Activated naive CD4-positive, alpha-beta T cell treated with anti-CD3 and anti-CD28 coated beads for 36 hours (primary cell): ENCODE measurements at regions of chr6 and their contacts with region 1.

Region 1: DNA sequence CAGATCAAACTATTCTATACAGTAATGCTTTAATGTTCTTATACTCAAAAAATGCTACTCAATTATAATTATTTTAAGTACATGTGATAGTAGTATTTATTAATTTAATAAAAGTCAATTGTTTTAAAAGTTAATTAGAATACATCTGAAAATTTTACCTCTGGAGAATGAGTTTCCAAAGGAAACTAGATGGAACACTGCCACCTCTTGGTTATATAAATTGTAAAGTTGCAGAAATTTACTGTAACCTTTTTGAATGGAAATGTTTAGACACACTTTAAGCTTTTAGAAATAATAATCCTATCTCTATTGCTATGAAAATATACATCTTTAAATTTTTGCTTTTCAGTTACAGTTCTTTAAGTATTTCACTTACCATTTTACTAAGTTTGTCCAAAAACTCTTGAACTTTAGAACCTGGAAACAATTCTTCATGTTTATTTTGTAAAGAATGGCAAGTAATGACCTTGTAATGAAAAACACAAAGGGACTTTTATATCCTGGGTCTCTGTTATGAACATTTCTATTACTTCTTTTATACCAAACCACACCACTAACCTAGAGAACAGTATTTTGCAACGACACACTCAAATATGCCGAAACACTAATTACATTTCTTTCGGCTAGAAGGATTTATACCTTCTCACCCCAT is 10.9 kb upstream of the BMP5 start:
- DNase-seq: no peak
- H3K4me3 Mint-ChIP-seq: no peak overlapping the region
- H3K27ac Mint-ChIP-seq: no peak overlapping the region
- H3K4me1 Mint-ChIP-seq: no peaks in the 10 kb centered on the region
- H3K27me3 Mint-ChIP-seq: no peaks in the 10 kb centered on the region

Region 2: DNA sequence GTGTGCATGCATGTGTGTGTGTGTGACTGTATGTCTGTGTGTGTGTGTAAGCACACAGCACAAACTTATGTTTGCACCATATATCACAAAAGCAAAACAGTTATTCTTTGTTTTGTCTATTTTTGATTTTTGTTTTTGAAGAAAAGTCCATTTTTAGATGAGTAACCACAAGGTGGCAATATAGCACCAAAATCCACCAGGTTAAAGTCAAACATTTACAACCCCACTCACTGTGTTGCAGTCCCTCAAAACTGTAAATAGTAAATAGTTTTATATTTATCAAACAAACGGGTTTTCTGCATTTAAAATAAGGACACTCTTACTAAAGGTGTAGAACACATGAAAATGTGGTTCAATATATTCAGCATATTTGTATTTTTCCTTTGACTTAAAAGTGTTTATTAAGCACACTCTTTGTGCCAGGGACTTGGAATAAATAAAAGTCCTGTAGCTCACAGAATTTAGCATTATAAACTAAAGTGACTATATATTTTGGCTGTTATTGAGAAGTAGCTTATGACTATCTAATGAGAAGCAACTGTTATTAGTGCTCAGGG is 440.6 kb before region 1 on chr6:
- CTCF ChIA-PET with region 1: no interaction called
- intact Hi-C with region 1: loop called (anchors 1 kb)
- DNase-seq: no peak
- H3K4me3 Mint-ChIP-seq: no peak overlapping the region
- H3K27ac Mint-ChIP-seq: no peak overlapping the region
- H3K4me1 Mint-ChIP-seq: no peaks in the 10 kb centered on the region
- H3K27me3 Mint-ChIP-seq: no peaks in the 10 kb centered on the region

Region 3: GRCh38 chr6:55617272-55617671 is 269.0 kb before region 1 on chr6:
- CTCF ChIA-PET with region 1: no interaction called
- intact Hi-C with region 1: loop called (anchors 2 kb)
- DNase-seq: peak; percentile 12
- H3K4me3 Mint-ChIP-seq: no peak overlapping the region
- H3K27ac Mint-ChIP-seq: no peak overlapping the region
- H3K4me1 Mint-ChIP-seq: no peaks in the 10 kb centered on the region
- H3K27me3 Mint-ChIP-seq: no peaks in the 10 kb centered on the region